Heart left ventricle (tissue), 16 donors: ENCODE measurements at regions of chr6 and their contacts with region 1.

Region 1: DNA sequence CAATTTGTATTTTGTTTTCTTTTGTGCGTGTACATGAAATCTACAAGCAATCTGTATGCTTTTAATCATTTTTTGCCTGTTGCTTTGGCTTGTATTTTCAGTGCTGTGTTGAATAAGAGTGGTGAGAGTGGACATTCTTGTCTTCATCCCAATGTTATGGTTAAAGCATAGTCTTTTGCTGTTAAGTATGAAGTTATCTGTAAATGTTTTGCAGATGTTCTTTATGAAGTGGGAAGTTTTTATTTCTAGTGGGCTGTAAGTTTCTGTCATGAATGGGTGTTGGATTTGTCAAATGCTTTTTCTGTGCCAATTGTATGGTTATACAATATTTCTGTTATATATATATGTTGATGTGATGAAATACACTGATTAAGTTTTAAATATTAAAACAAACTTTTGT is 24.2 kb downstream of the ZKSCAN3 start:
- DNase-seq: no peak
- ATAC-seq: no peak
- H3K4me3 ChIP-seq: no peak overlapping the region
- H3K27ac ChIP-seq: no peak overlapping the region
- H3K4me1 ChIP-seq: no peaks in the 10 kb centered on the region
- H3K27me3 ChIP-seq: no peaks in the 10 kb centered on the region
- CTCF ChIP-seq: no peak
- POLR2A ChIP-seq: no peak

Region 2: GRCh38 chr6:28303570-28303969 is 70.4 kb before region 1 on chr6:
- intact Hi-C with region 1: no loop called
- DNase-seq: no peak
- ATAC-seq: no peak
- H3K4me3 ChIP-seq: no peak overlapping the region
- H3K27ac ChIP-seq: no peak overlapping the region
- H3K4me1 ChIP-seq: no peaks in the 10 kb centered on the region
- H3K27me3 ChIP-seq: no peaks in the 10 kb centered on the region
- CTCF ChIP-seq: no peak
- POLR2A ChIP-seq: no peak

Region 3: DNA sequence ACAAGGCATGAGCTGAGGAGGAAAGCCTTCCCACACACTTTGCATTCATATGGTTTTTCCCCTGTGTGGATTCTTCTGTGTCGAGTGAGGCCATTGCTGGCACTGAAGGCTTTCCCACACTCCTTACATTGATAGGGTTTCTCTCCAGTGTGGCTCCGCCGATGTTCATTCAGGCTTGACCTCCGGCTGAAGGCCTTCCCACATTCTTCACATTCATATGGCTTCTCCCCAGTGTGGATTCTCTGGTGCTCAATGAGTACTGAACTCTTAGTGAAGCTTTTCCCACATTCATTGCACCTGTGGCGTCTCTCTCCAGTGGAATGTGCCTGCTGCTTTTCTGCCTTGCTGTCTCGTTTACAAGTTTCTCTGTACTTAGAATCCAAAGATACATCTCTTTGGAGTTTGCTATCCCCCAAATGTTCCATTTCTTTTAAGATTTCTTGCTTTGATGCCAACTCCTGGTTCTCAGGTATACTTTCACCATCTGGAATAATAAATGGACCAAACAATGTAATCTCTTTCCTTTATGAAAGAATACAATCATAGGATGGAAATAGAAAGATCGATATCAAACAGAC is 47.5 kb before region 1 on chr6:
- intact Hi-C with region 1: loop called in 1 of 10 experiments (anchors 2 kb)
- DNase-seq: no peak
- ATAC-seq: no peak
- H3K4me3 ChIP-seq: no peak overlapping the region
- H3K27ac ChIP-seq: no peak overlapping the region
- H3K4me1 ChIP-seq: no peaks in the 10 kb centered on the region
- H3K27me3 ChIP-seq: no peaks in the 10 kb centered on the region
- CTCF ChIP-seq: no peak
- POLR2A ChIP-seq: no peak

Region 4: DNA sequence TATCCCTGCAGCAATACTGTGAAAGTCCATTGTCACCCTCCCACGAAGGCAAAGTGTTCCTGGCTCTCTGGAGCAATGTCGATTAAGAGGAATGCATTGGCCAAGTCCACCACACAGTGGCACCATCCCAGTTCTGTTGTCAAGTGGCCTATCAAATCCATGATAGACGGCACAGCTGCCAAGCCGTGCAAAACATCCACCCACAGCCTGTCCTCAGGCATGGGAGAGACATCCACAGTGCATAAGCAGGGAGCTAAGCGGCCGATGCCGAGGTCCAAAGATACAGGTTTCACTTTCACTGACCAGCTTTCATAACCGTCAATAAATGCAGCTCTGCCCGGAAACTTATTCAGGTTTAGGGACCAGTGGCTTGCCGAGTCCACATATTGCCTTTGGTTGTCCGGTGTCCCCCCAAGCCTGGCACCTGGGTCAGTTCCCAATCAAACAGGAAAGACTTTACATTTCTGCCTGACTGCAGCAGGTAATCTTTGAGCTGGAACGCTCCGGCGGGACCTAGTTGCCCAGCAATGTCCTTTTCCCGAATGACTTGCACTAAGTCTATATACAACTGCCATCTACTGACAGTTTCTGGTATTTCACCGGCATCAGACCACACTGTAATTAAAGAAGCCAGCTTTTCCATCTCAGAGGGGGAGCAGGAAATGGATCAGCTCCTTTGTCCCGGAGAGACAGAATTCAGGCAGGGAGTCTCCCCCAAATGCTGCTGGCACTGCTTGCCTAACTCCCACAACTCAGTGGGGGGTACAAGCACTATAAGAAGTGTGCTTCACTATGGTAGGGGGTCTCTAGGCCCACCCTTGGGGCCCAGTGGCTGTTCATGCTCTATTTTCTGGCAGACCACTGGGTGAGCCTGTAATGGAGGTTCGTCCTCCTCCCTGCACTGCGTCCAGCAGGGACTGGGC is 17.9 kb before region 1 on chr6:
- intact Hi-C with region 1: no loop called
- DNase-seq: peak; percentile 67 to 84 (median 80)
- ATAC-seq: peak; percentile 86 to 90 (median 89)
- H3K4me3 ChIP-seq: peak overlapping the region; percentile 20 to 86 (median 67)
- H3K27ac ChIP-seq: peak overlapping the region; percentile 72 to 91 (median 89)
- H3K4me1 ChIP-seq: peaks cover 3 to 42% (median 29%) of the 10 kb centered on the region in 12 donors
- H3K27me3 ChIP-seq: no peaks in the 10 kb centered on the region
- CTCF ChIP-seq: peak; percentile 71 to 91 (median 80)
- POLR2A ChIP-seq: no peak

Region 5: GRCh38 chr6:28489366-28490204 is 115.7 kb after region 1 on chr6:
- intact Hi-C with region 1: no loop called
- DNase-seq: peak in 2 of 5 donors; percentile 38 to 53
- ATAC-seq: peak in 2 of 4 donors; percentile 51 to 93
- H3K4me3 ChIP-seq: peak overlapping the region in 11 of 12 donors; percentile 14 to 44 (median 36)
- H3K27ac ChIP-seq: peak overlapping the region in 2 of 12 donors; percentile 5 to 65
- H3K4me1 ChIP-seq: peaks cover 0 to 9% (median 0%) of the 10 kb centered on the region in 12 donors
- H3K27me3 ChIP-seq: peaks cover 5 to 83% (median 25%) of the 10 kb centered on the region in 9 donors
- CTCF ChIP-seq: no peak
- POLR2A ChIP-seq: no peak